ENCODE measurements at regions of chr9 and their contacts with region 1.

Region 1: DNA sequence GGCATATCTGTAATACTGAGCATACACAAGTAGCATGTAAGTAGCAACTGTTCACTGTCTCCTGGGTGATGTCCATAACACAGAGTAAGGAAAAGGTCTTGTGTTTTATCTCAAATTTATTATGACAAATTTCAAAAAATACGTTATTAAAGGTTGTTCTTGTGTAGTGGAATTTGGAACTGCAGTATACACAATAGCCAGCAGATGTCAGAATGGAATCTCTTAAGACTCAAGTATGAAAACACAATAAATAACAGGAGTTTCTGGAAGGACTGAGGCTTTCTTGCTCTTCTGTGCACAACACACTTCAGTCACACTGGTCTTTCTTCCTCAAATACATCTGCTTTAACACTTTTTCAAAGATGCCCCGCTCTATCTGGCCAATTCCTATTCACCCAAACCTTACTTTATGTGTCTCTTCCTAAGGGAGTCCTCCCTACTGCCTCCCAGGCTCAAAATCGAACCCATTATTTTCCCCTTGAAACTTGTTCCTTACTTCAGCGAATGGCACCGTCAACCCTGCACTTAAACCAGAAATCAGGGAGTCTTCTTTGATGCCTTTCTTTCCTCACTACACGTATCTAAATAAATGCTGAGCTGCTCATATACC is 6.5 kb upstream of the FBXO10 start:
- DNase-seq: peak; percentile 49
- H3K4me3 Mint-ChIP-seq: no peak overlapping the region
- H3K27ac Mint-ChIP-seq: no peak overlapping the region
- H3K4me1 Mint-ChIP-seq: peaks cover 7% of the 10 kb centered on the region
- H3K27me3 Mint-ChIP-seq: no peaks in the 10 kb centered on the region
- CTCF ChIP-seq: peak; percentile 52

Region 2: DNA sequence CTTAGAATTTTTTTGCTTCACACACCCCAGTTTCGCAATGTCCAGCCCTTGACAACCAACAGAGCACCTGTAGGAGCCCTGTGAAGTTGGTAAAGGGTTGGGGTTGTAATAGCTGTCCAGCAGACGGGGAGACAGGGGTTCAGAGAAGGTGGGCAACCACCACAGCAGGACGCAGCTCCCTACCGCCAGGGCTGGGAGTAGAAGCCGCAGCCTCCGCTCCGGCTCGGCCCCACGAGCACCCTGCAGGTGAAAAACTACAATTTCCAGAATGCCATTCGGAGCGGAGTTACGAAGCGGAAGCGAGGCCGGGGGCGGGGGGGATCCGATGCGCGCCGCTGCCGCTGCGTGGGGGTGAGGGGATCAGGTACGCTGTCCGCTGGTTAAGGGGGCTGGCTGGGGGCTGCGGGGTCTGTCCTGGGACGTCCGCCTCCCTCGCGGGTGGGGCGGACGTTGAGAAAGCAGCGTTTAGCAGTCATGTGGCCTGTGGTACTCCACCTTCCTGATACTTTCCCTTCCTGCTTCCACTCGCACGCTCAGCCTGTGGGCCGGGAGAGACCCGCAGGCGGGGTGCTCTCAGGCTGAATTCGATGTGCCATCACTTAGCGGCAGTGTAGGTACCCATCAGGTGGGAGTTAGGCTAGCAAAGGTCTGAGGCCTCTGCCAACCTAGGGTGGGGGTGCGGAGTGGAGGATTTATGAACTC is 171.0 kb after region 1 on chr9 and contains the start of gene TRMT10B:
- CTCF ChIA-PET with region 1: interaction called, 8 read pairs
- POLR2A ChIA-PET with region 1: no interaction called
- intact Hi-C with region 1: loop called (anchors 5 kb)
- DNase-seq: peak; percentile 44
- H3K4me3 Mint-ChIP-seq: peak within 1 kb of the TSS; percentile 78
- H3K27ac Mint-ChIP-seq: peak within 1 kb of the TSS; percentile 57
- H3K4me1 Mint-ChIP-seq: no peaks in the 10 kb centered on the region
- H3K27me3 Mint-ChIP-seq: no peaks in the 10 kb centered on the region
- CTCF ChIP-seq: no peak
- total RNA-seq, gene TRMT10B: 4.9 and 6.9 TPM in 2 replicates

Region 3: GRCh38 chr9:38263532-38263931 is 680.9 kb after region 1 on chr9:
- CTCF ChIA-PET with region 1: no interaction called
- POLR2A ChIA-PET with region 1: no interaction called
- intact Hi-C with region 1: loop called (anchors 10 kb)
- DNase-seq: peak; percentile 43
- H3K4me3 Mint-ChIP-seq: no peak overlapping the region
- H3K27ac Mint-ChIP-seq: no peak overlapping the region
- H3K4me1 Mint-ChIP-seq: no peaks in the 10 kb centered on the region
- H3K27me3 Mint-ChIP-seq: peaks cover 67% of the 10 kb centered on the region
- CTCF ChIP-seq: peak; percentile 48